T-cell (primary cell): ENCODE measurements at regions of chr14 and their contacts with region 1.

Region 1: DNA sequence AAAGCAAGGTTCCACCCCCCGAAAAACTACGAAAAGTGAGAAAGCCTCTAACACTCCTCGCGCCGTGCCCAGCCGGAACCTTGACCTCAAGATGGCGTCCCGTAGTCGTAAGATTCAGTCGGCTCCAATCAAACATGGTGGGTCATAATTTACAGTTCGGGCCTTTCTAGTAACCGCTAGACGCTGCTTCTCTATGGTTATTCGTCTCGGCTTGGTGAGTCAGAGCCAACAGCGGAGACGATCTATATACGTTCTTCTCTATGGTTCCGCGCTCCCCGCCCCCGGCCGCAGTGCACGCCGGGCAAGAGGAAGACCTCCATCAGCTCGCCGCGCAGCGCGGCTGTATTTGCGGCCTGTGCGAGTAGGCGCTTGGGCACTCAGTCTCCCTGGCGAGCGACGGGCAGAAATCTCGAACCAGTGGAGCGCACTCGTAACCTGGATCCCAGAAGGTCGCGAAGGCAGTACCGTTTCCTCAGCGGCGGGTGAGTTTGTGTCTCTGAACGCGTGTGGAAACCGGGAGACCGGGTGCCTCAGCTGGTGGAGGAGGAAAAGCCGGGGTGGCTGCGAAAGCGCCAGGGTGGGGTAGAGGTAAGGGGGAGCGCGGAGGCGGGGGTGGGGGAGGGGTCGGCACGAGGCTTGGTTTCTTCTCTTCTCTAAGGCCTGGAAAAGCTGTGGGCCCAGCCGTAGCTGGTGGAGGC is at the start of gene RBM25:
- DNase-seq: peak; percentile 90 to 97 (median 94)
- ATAC-seq: peak; percentile 94 to 98 (median 96)
- H3K4me3 ChIP-seq: peak within 1 kb of the TSS; percentile 96 to 97
- H3K4me3 Mint-ChIP-seq: no peak within 1 kb of the TSS
- H3K27ac ChIP-seq: peak within 1 kb of the TSS; percentile 96
- H3K27ac Mint-ChIP-seq: no peak within 1 kb of the TSS
- H3K4me1 ChIP-seq: peaks cover 12 to 34% of the 10 kb centered on the region in 2 experiments
- H3K4me1 Mint-ChIP-seq: peaks cover 36 to 48% (median 45%) of the 10 kb centered on the region in 3 donors
- H3K27me3 ChIP-seq: no peaks in the 10 kb centered on the region
- H3K27me3 Mint-ChIP-seq: no peaks in the 10 kb centered on the region
- total RNA-seq, gene RBM25: 103 to 163 (median 122) TPM

Region 2: GRCh38 chr14:72941286-72941985 is 116.9 kb before region 1 on chr14:
- CTCF ChIA-PET with region 1: no interaction called
- POLR2A ChIA-PET with region 1: no interaction called
- DNase-seq: no peak
- ATAC-seq: no peak
- H3K4me3 ChIP-seq: no peak overlapping the region
- H3K4me3 Mint-ChIP-seq: no peak overlapping the region
- H3K27ac ChIP-seq: no peak overlapping the region
- H3K27ac Mint-ChIP-seq: no peak overlapping the region
- H3K4me1 ChIP-seq: peaks cover 0 to 10% of the 10 kb centered on the region in 2 experiments
- H3K4me1 Mint-ChIP-seq: peaks cover 15 to 20% (median 17%) of the 10 kb centered on the region in 3 donors
- H3K27me3 ChIP-seq: no peaks in the 10 kb centered on the region
- H3K27me3 Mint-ChIP-seq: no peaks in the 10 kb centered on the region

Region 3: GRCh38 chr14:73026845-73027542 is 31.4 kb before region 1 on chr14 and contains the start of gene ZFYVE1:
- CTCF ChIA-PET with region 1: interaction called, 7 to 10 read pairs
- POLR2A ChIA-PET with region 1: interaction called, 9 to 15 read pairs
- DNase-seq: peak; percentile 73 to 93 (median 83)
- ATAC-seq: peak; percentile 99 to 100 (median 100)
- H3K4me3 ChIP-seq: peak within 1 kb of the TSS; percentile 78 to 95
- H3K4me3 Mint-ChIP-seq: peak within 1 kb of the TSS; percentile 93 to 97 (median 97)
- H3K27ac ChIP-seq: peak within 1 kb of the TSS; percentile 25
- H3K27ac Mint-ChIP-seq: peak within 1 kb of the TSS; percentile 86 to 89
- H3K4me1 ChIP-seq: peaks cover 6 to 19% of the 10 kb centered on the region in 2 experiments
- H3K4me1 Mint-ChIP-seq: peaks cover 44 to 45% (median 45%) of the 10 kb centered on the region in 3 donors
- H3K27me3 ChIP-seq: no peaks in the 10 kb centered on the region
- H3K27me3 Mint-ChIP-seq: no peaks in the 10 kb centered on the region
- total RNA-seq, gene ZFYVE1: 15.5 to 20.9 (median 19.4) TPM